CD4-positive, alpha-beta T cell (primary cell): ENCODE measurements at regions of chr12 and their contacts with region 1.

Region 1: DNA sequence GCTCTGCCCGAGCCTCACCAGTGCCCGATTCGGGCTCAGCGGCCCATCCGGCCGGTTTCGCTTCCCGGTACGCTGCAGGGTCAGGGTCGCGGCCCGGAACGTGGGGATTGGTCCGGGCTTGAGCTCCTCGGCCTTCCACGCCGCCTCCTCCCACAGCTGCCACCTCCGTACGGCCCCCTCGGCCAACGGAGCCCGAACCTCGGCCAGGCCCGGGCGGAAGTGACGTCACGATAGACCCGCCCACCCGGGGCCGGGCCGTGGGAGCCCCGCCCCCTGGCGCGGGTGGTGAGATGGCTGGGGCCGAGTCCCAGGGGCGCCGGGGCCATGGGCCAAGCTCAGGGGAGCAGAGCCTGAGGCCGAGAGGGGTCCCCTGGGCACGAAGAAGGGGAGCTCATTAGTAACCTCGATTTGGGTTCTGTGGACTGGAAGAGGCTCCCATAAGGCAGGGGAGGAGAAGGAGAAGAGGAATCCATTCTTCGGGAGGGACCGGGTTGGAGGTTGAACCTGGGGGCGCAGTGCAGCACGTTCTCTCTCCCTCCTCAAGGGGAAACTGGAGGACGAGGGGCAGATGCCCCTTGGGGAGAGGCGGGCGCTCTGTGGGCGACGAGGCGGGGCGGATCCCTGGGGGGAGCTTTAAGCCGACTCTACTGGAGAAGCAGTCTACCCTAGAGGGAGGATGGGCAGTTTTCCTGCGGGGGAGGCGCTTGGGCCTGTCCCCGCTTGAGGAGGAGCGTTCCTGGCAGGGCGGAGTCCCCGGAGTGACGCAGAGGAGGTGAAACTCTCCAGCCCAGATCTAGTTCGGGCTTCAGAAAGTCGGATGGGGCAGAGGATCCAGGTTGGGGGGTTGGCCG is at the start of gene MLF2:
- DNase-seq: peak; percentile 94 to 99 (median 96)
- ATAC-seq: peak; percentile 92
- H3K4me3 ChIP-seq: peak within 1 kb of the TSS; percentile 80
- H3K4me3 Mint-ChIP-seq: peak within 1 kb of the TSS; percentile 96
- H3K27ac ChIP-seq: peak within 1 kb of the TSS; percentile 86 to 96
- H3K27ac Mint-ChIP-seq: peak within 1 kb of the TSS; percentile 100
- H3K4me1 ChIP-seq: peaks cover 24% of the 10 kb centered on the region
- H3K4me1 Mint-ChIP-seq: peaks cover 19% of the 10 kb centered on the region
- H3K27me3 ChIP-seq: no peaks in the 10 kb centered on the region
- H3K27me3 Mint-ChIP-seq: no peaks in the 10 kb centered on the region
- CTCF ChIP-seq: peak; percentile 79
- total RNA-seq, gene MLF2: 114 to 121 TPM

Region 2: GRCh38 chr12:5912437-5913334 is 840.5 kb before region 1 on chr12:
- CTCF ChIA-PET with region 1: no interaction called
- POLR2A ChIA-PET with region 1: no interaction called
- intact Hi-C with region 1: no loop called
- DNase-seq: no peak
- ATAC-seq: no peak
- H3K4me3 ChIP-seq: no peak overlapping the region
- H3K4me3 Mint-ChIP-seq: no peak overlapping the region
- H3K27ac ChIP-seq: no peak overlapping the region
- H3K27ac Mint-ChIP-seq: no peak overlapping the region
- H3K4me1 ChIP-seq: no peaks in the 10 kb centered on the region
- H3K4me1 Mint-ChIP-seq: no peaks in the 10 kb centered on the region
- H3K27me3 ChIP-seq: peaks cover 2 to 6% of the 10 kb centered on the region in 2 experiments
- H3K27me3 Mint-ChIP-seq: peaks cover 12% of the 10 kb centered on the region
- CTCF ChIP-seq: no peak

Region 3: DNA sequence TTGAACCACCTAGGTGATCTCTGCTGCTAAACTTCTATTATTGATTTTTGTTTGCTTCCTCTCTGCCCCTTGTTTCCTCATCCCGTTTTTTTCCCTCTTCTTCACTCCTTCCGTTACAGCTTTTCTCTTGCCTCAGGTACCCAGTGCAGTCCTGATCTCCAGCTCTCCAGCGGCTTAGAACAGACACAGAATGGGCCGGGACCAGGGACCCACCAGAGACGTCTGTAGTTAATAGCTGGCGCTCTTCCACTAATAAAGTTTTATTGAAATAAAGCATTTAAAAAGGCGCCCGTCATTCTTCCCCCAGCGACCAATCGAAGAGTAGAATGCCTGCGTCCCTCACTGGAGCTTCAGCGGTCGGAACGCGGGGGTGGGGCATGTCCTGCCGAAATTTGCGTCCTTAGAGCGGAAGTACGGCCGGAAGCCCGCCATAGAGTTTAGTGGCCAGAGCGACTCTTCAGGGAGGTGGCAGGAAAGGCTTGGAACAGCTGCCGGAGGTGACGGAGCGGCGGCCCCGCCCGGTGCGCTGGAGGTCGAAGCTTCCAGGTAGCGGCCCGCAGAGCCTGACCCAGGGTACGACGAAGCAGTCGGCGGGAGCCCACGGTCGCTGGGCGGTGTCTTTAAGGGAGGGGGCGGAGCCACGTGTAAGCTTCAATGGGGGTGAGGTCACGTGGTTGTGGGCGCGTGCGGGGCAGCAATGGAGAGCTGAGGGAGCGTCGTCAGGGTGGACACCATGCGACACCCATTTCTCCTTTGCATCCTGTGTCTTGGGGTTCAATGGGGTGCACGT is 29.3 kb before region 1 on chr12 and contains the start of gene COPS7A:
- CTCF ChIA-PET with region 1: interaction called, 10 read pairs
- POLR2A ChIA-PET with region 1: interaction called, 29 read pairs
- intact Hi-C with region 1: loop called in 1 of 2 experiments (anchors 2 kb)
- DNase-seq: peak; percentile 81 to 99 (median 93)
- ATAC-seq: peak; percentile 84
- H3K4me3 ChIP-seq: peak within 1 kb of the TSS; percentile 59
- H3K4me3 Mint-ChIP-seq: peak within 1 kb of the TSS; percentile 87
- H3K27ac ChIP-seq: peak within 1 kb of the TSS; percentile 68 to 88
- H3K27ac Mint-ChIP-seq: peak within 1 kb of the TSS; percentile 83
- H3K4me1 ChIP-seq: peaks cover 18% of the 10 kb centered on the region
- H3K4me1 Mint-ChIP-seq: peaks cover 28% of the 10 kb centered on the region
- H3K27me3 ChIP-seq: no peaks in the 10 kb centered on the region
- H3K27me3 Mint-ChIP-seq: no peaks in the 10 kb centered on the region
- CTCF ChIP-seq: no peak
- total RNA-seq, gene COPS7A: 9.4 to 9.6 TPM

Region 4: GRCh38 chr12:6778574-6779550 is 25.7 kb after region 1 on chr12:
- CTCF ChIA-PET with region 1: interaction called, 17 read pairs
- POLR2A ChIA-PET with region 1: interaction called, 24 read pairs
- intact Hi-C with region 1: loop called (anchors 1 kb)
- DNase-seq: peak; percentile 80 to 93 (median 83)
- ATAC-seq: peak; percentile 84
- H3K4me3 ChIP-seq: peak overlapping the region; percentile 59
- H3K4me3 Mint-ChIP-seq: peak overlapping the region; percentile 85
- H3K27ac ChIP-seq: peak overlapping the region in 1 of 2 donors; percentile 24
- H3K27ac Mint-ChIP-seq: peak overlapping the region; percentile 77
- H3K4me1 ChIP-seq: peaks cover 70% of the 10 kb centered on the region
- H3K4me1 Mint-ChIP-seq: peaks cover 59% of the 10 kb centered on the region
- H3K27me3 ChIP-seq: peaks cover 0 to 8% of the 10 kb centered on the region in 2 experiments
- H3K27me3 Mint-ChIP-seq: peaks cover 19% of the 10 kb centered on the region
- CTCF ChIP-seq: peak; percentile 94

Region 5: GRCh38 chr12:6792522-6793201 is 39.5 kb after region 1 on chr12:
- CTCF ChIA-PET with region 1: interaction called, 21 read pairs
- POLR2A ChIA-PET with region 1: interaction called, 18 read pairs
- intact Hi-C with region 1: loop called in 1 of 2 experiments (anchors 2 kb)
- DNase-seq: peak in 12 of 14 experiments; percentile 41 to 75 (median 58)
- ATAC-seq: peak; percentile 69
- H3K4me3 ChIP-seq: peak overlapping the region; percentile 66
- H3K4me3 Mint-ChIP-seq: peak overlapping the region; percentile 96
- H3K27ac ChIP-seq: peak overlapping the region; percentile 72 to 81
- H3K27ac Mint-ChIP-seq: peak overlapping the region; percentile 93
- H3K4me1 ChIP-seq: peaks cover 79% of the 10 kb centered on the region
- H3K4me1 Mint-ChIP-seq: peaks cover 80% of the 10 kb centered on the region
- H3K27me3 ChIP-seq: no peaks in the 10 kb centered on the region
- H3K27me3 Mint-ChIP-seq: no peaks in the 10 kb centered on the region
- CTCF ChIP-seq: no peak

Region 6: DNA sequence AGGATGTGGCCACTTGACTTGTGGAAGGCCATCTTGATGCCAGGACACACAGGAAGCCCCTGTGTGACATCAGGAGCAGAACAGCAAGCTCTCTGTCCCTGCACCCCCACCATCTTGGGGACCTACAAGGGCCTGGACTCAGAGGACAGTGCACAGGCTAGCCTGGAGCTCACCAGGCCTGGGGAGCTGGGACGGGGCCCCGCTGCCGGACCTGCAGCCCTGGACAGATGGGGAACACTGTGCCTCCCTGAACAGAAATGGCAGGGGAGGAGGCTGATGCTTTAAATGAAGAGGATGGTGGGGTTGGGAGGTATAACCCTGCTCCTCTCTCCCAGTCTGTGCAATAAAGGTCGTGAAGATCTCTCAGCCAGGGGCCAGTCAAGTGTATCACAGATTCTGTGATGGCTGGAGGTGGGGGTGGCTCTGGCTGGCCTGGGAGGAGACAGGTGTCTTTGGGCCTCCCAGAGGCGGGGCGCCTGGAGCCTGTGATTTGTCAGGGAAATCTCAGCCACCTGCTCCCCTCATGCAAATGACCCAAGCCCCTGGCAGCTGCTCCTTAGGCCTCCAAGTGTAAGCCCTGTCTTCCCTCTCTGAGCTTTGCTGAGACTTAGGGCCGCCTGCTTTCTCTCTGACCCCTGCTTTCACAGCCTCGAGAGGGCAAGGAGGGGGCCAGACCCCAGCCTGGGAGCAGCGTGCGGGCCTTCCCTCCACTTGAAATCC is 86.5 kb after region 1 on chr12:
- CTCF ChIA-PET with region 1: no interaction called
- POLR2A ChIA-PET with region 1: interaction called, 9 read pairs
- intact Hi-C with region 1: loop called (anchors 1 kb)
- DNase-seq: no peak
- ATAC-seq: no peak
- H3K4me3 ChIP-seq: no peak overlapping the region
- H3K4me3 Mint-ChIP-seq: no peak overlapping the region
- H3K27ac ChIP-seq: no peak overlapping the region
- H3K27ac Mint-ChIP-seq: no peak overlapping the region
- H3K4me1 ChIP-seq: peaks cover 5% of the 10 kb centered on the region
- H3K4me1 Mint-ChIP-seq: peaks cover 6% of the 10 kb centered on the region
- H3K27me3 ChIP-seq: no peaks in the 10 kb centered on the region
- H3K27me3 Mint-ChIP-seq: no peaks in the 10 kb centered on the region
- CTCF ChIP-seq: no peak

Region 7: GRCh38 chr12:6970089-6970527 is 217.0 kb after region 1 on chr12:
- CTCF ChIA-PET with region 1: no interaction called
- POLR2A ChIA-PET with region 1: no interaction called
- intact Hi-C with region 1: no loop called
- DNase-seq: no peak
- ATAC-seq: peak; percentile 8
- H3K4me3 ChIP-seq: peak overlapping the region; percentile 99
- H3K4me3 Mint-ChIP-seq: peak overlapping the region; percentile 100
- H3K27ac ChIP-seq: peak overlapping the region; percentile 89 to 93
- H3K27ac Mint-ChIP-seq: peak overlapping the region; percentile 90
- H3K4me1 ChIP-seq: peaks cover 41% of the 10 kb centered on the region
- H3K4me1 Mint-ChIP-seq: peaks cover 42% of the 10 kb centered on the region
- H3K27me3 ChIP-seq: no peaks in the 10 kb centered on the region
- H3K27me3 Mint-ChIP-seq: no peaks in the 10 kb centered on the region
- CTCF ChIP-seq: no peak